Panc1 (cell line): ENCODE measurements at regions of chr3 and their contacts with region 1.

Region 1: DNA sequence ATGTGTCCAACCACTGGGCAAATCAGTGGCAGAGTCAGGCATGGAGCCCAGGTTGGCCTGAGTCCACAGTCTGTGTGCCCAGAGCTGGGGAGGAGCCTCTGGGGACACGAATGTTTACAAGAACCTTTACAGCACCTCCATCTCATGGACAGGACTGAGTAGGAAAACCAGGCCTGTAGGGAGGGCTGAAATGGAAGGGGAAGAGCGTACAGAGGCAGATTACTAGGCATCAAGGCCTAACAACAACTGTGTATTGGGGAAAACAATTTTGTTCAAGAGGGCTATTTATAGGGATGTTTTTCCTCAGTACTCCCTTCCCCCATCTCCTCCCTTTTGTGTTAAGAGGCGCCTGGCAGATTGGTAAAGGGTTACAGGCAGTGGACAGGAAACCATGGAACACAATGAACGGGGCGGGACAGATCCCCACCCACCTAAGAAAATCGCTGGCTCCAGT is 15.1 kb upstream of the ARHGAP31 start:
- DNase-seq: no peak
- ATAC-seq: peak; percentile 62; the same call in 1 of the 2 replicates
- H3K4me3 ChIP-seq: no peak overlapping the region
- H3K27ac ChIP-seq: no peak overlapping the region
- H3K4me1 ChIP-seq: no peaks in the 10 kb centered on the region
- H3K27me3 ChIP-seq: no peaks in the 10 kb centered on the region
- CTCF ChIP-seq: no peak

Region 2: DNA sequence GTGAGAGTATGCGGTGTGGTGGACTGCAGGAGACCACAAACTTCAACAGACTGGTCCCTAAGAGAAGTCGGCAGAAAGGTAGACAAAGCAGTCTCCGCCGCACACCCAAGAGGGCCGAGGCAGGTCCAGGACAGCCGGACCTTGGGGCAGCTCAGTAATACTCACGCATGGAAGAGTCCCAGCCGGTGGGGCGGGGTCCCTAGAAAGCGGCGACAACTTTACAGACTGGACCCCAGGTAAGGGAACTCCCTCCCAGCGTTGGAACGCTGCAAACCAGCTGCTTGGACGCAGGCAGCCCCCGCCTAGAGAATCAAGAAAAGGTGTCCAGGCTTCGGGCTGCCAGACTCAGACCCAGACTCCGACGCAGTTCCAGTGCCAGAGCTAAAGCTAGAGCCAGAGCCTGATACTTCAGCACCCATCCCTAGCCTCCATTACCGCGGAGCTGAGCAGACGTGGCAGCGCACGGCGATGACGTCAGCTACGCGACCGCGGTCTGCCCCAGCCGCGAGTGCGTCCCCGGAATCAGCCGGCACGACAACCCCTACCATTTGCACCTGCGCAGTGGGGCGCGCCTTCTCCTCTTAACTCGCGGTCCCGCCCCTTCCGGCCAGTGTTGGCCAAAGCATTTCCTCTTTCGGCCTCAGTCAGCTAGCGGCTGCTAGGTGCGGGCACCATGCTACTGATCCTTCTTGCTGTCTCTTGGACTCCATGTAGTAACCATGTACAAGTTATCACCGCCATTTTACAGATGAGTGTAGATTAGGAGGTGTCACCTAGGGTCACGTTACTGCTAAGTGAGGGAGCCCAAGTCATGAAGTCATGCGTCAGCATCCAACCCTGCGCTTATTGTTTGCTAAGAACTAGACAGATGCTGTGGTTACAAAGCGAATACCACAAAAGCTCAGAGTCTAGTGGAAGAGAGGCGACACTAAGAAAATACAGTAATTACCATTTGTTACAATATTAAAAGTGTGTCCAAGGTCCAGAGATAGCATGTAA is 184.3 kb after region 1 on chr3 and contains the start of gene TMEM39A:
- CTCF ChIA-PET with region 1: no interaction called
- POLR2A ChIA-PET with region 1: no interaction called
- in situ Hi-C with region 1: no loop called
- intact Hi-C with region 1: loop called (anchors 10 kb)
- DNase-seq: peak; percentile 91
- ATAC-seq: peak; percentile 99
- H3K4me3 ChIP-seq: peak within 1 kb of the TSS; percentile 80 to 97
- H3K27ac ChIP-seq: peak within 1 kb of the TSS; percentile 97
- H3K4me1 ChIP-seq: peaks cover 14% of the 10 kb centered on the region
- H3K27me3 ChIP-seq: no peaks in the 10 kb centered on the region
- CTCF ChIP-seq: no peak
- total RNA-seq, gene TMEM39A: 47.8 TPM